IMR-90 (cell line): ENCODE measurements at regions of chr20 and their contacts with region 1.

Region 1: GRCh38 chr20:25399037-25399430 is 8.4 kb upstream of the ABHD12 start:
- DNase-seq: peak; percentile 83
- ATAC-seq: peak; percentile 98
- H3K4me3 ChIP-seq: no peak overlapping the region
- H3K27ac ChIP-seq: no peak overlapping the region
- H3K4me1 ChIP-seq: peaks cover 5% of the 10 kb centered on the region; the same call in 1 of the 2 replicates
- H3K27me3 ChIP-seq: no peaks in the 10 kb centered on the region
- CTCF ChIP-seq: peak; percentile 85
- POLR2A ChIP-seq: no peak
- RAD21 ChIP-seq: peak; percentile 86

Region 2: DNA sequence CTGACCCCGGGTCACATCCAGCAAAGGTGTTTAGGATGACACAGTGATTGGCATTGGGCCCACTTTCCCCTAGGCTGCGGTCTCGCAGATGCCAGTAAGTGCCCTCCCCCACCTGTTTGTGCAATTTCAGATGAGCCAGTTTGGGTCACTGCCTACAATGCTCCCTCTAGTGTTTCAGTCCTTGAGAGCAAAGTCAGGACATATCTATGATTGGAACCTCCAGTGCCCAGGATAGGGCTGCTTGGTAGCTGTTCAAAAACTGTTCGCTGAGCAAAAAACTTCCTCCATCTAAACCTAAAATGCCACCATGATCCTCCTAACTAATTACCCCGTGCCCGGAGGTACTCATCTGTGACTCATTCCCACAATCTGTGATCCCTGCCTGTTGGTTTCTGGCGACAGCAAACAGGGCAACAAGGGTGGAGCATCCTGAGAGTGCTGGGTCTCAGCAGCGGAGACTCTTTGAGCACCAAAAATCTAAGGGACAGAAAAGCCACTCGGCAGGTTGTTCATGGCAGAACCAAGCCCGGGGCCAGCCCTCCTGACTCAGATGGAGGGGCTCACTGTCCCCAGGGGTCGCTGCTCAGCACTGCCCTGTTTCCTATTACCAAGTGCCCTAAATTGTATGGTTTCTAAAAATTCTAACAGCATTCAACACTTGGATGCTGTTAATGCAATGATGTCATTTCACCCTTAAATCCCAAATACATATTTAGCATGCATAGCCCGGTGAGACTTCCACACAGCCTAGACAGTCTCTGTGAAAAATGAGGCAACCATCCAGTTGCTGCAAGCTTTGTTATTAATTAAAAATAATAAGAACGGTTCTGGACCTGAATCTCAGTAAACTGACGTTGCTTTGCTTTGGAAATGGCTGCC is 322.1 kb before region 1 on chr20:
- CTCF ChIA-PET with region 1: no interaction called
- POLR2A ChIA-PET with region 1: no interaction called
- dilution Hi-C with region 1: no loop called
- in situ Hi-C with region 1: no loop called
- intact Hi-C with region 1: loop called (anchors 5 kb)
- DNase-seq: peak; percentile 1
- ATAC-seq: peak; percentile 10; the same call in 1 of the 2 replicates
- H3K4me3 ChIP-seq: no peak overlapping the region
- H3K27ac ChIP-seq: no peak overlapping the region
- H3K4me1 ChIP-seq: no peaks in the 10 kb centered on the region
- H3K27me3 ChIP-seq: peaks cover 73% of the 10 kb centered on the region
- CTCF ChIP-seq: no peak
- POLR2A ChIP-seq: no peak
- RAD21 ChIP-seq: no peak

Region 3: GRCh38 chr20:25204550-25205276 is 194.3 kb before region 1 on chr20:
- CTCF ChIA-PET with region 1: no interaction called
- POLR2A ChIA-PET with region 1: no interaction called
- dilution Hi-C with region 1: no loop called
- in situ Hi-C with region 1: no loop called
- intact Hi-C with region 1: loop called (anchors 5 kb)
- DNase-seq: no peak
- ATAC-seq: no peak
- H3K4me3 ChIP-seq: no peak overlapping the region
- H3K27ac ChIP-seq: no peak overlapping the region
- H3K4me1 ChIP-seq: peaks cover 3% of the 10 kb centered on the region; the same call in 1 of the 2 replicates
- H3K27me3 ChIP-seq: no peaks in the 10 kb centered on the region
- CTCF ChIP-seq: no peak
- POLR2A ChIP-seq: no peak
- RAD21 ChIP-seq: no peak

Region 4: DNA sequence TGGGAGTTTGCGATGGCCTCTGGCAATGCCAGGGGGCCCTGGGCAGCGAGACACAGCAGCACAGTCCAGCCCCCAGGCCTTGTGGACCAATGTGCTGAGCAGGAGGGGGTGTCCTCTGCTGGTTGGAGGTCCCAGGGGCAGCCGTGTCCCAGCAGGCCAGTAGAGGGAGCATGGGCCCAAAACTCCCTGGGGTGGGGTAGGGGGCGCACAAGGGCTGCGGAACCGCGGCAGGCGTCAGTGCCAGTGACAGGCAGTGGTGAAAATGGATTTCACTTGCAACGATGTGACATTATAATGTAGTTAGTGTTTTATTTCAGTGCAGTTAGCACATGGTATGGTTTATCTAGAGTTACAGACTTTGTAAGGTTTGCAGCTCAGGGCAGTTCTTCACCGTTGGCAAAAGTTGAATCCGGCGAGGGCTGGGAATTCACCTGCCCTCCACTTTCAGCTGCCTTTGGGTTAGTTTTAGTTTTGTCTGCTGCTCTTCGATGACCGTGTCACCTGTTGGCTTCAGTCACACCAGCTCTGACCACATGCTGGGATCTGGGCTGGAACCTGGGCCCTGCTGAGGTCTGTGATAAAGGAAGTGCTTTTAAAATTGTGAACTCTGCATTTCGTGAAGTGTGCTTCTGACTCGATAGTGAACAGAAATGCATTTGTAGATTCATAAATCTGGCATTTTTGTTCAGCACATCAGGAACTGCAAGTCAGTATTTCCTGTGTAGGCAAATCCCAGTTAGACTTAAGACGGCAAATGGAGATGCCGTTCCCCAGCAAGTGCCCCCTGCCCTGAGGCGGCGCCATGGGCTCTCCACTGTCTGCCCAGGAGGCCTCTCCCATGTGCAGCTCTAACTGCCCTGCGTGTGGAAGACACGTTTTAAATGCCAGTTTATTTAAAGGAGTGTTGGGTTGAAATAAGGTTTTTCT is 104.3 kb before region 1 on chr20:
- CTCF ChIA-PET with region 1: interaction called, 24 read pairs
- POLR2A ChIA-PET with region 1: no interaction called
- dilution Hi-C with region 1: no loop called
- in situ Hi-C with region 1: loop called (anchors 5 kb)
- intact Hi-C with region 1: loop called (anchors 1 kb)
- DNase-seq: peak; percentile 52
- ATAC-seq: peak; percentile 81
- H3K4me3 ChIP-seq: no peak overlapping the region
- H3K27ac ChIP-seq: no peak overlapping the region
- H3K4me1 ChIP-seq: peaks cover 7% of the 10 kb centered on the region
- H3K27me3 ChIP-seq: no peaks in the 10 kb centered on the region
- CTCF ChIP-seq: peak; percentile 99
- POLR2A ChIP-seq: no peak
- RAD21 ChIP-seq: peak; percentile 85

Region 5: GRCh38 chr20:25336561-25337422 is 62.2 kb before region 1 on chr20:
- CTCF ChIA-PET with region 1: interaction called, 9 read pairs
- POLR2A ChIA-PET with region 1: interaction called, 3 read pairs
- dilution Hi-C with region 1: no loop called
- in situ Hi-C with region 1: no loop called
- intact Hi-C with region 1: loop called (anchors 1 kb)
- DNase-seq: peak; percentile 35
- ATAC-seq: peak; percentile 81; the same call in 1 of the 2 replicates
- H3K4me3 ChIP-seq: no peak overlapping the region
- H3K27ac ChIP-seq: no peak overlapping the region
- H3K4me1 ChIP-seq: peaks cover 7% of the 10 kb centered on the region; the same call in 1 of the 2 replicates
- H3K27me3 ChIP-seq: no peaks in the 10 kb centered on the region
- CTCF ChIP-seq: peak; percentile 48
- POLR2A ChIP-seq: no peak
- RAD21 ChIP-seq: peak; percentile 57